Natural killer cell (primary cell): ENCODE measurements at regions of chr18 and their contacts with region 1.

Region 1: GRCh38 chr18:47772374-47773248 is 157.8 kb downstream of the SMAD2 start:
- DNase-seq: peak; percentile 54 to 66
- ATAC-seq: peak; percentile 66 to 81 (median 68)
- H3K4me3 ChIP-seq: no peak overlapping the region
- H3K4me3 Mint-ChIP-seq: no peak overlapping the region
- H3K27ac ChIP-seq: no peak overlapping the region
- H3K27ac Mint-ChIP-seq: no peak overlapping the region
- H3K4me1 ChIP-seq: no peaks in the 10 kb centered on the region
- H3K4me1 Mint-ChIP-seq: peaks cover 9 to 15% of the 10 kb centered on the region in 2 donors
- H3K27me3 ChIP-seq: no peaks in the 10 kb centered on the region
- H3K27me3 Mint-ChIP-seq: peaks cover 0 to 3% of the 10 kb centered on the region in 2 donors
- CTCF ChIP-seq: peak; percentile 92

Region 2: GRCh38 chr18:48022531-48023329 is 250.1 kb after region 1 on chr18:
- intact Hi-C with region 1: loop called (anchors 1 kb)
- DNase-seq: peak in 1 of 2 donors; percentile 63
- ATAC-seq: peak; percentile 59 to 77 (median 76)
- H3K4me3 ChIP-seq: no peak overlapping the region
- H3K4me3 Mint-ChIP-seq: no peak overlapping the region
- H3K27ac ChIP-seq: no peak overlapping the region
- H3K27ac Mint-ChIP-seq: no peak overlapping the region
- H3K4me1 ChIP-seq: peaks cover 13% of the 10 kb centered on the region
- H3K4me1 Mint-ChIP-seq: peaks cover 0 to 8% of the 10 kb centered on the region in 2 donors
- H3K27me3 ChIP-seq: no peaks in the 10 kb centered on the region
- H3K27me3 Mint-ChIP-seq: peaks cover 6 to 23% of the 10 kb centered on the region in 2 donors
- CTCF ChIP-seq: peak; percentile 58

Region 3: DNA sequence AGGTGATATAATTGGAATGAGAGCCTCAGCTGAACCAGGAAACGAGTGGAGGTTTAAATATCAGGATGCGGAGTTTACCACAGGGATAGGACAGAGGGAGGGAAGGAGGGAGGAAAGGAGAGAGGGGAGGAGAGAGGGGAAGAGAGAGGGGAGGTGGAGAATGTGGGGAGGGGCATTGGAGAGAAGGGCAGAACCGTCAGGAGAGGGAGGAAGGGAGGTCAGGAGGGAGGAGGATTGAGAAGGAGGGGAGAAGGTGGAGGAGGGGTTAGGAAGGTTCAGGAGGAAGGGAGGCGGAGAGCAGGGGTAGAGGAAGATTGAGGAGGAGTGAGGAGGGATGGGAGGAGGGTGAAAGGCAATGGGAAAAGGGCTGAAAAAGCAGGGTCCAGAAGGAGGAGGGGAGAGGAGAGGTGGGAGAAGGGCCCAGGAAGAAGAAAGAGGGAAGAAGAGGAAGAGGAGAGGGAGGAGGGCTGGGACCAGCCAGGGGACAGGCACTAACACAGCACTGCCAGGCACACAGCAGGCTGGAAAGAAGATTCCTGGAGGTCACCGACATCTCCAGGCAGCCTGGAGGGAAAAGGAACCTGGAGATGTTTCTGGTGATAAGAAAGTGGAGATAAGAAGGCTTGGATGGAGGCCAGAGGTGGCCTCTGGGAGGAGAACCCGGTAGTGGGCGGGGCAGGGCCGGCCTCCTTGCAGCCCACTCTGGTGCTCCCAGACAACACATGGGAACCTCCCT is 334.5 kb after region 1 on chr18:
- intact Hi-C with region 1: loop called (anchors 5 kb)
- DNase-seq: no peak
- ATAC-seq: no peak
- H3K4me3 ChIP-seq: no peak overlapping the region
- H3K4me3 Mint-ChIP-seq: no peak overlapping the region
- H3K27ac ChIP-seq: no peak overlapping the region
- H3K27ac Mint-ChIP-seq: no peak overlapping the region
- H3K4me1 ChIP-seq: no peaks in the 10 kb centered on the region
- H3K4me1 Mint-ChIP-seq: no peaks in the 10 kb centered on the region
- H3K27me3 ChIP-seq: no peaks in the 10 kb centered on the region
- H3K27me3 Mint-ChIP-seq: peaks cover 13 to 24% of the 10 kb centered on the region in 2 donors
- CTCF ChIP-seq: no peak

Region 4: GRCh38 chr18:48445540-48445939 is 672.9 kb after region 1 on chr18:
- intact Hi-C with region 1: loop called (anchors 5 kb)
- DNase-seq: peak; percentile 51 to 80
- ATAC-seq: peak; percentile 77 to 86 (median 80)
- H3K4me3 ChIP-seq: no peak overlapping the region
- H3K4me3 Mint-ChIP-seq: no peak overlapping the region
- H3K27ac ChIP-seq: no peak overlapping the region
- H3K27ac Mint-ChIP-seq: no peak overlapping the region
- H3K4me1 ChIP-seq: no peaks in the 10 kb centered on the region
- H3K4me1 Mint-ChIP-seq: peaks cover 6% of the 10 kb centered on the region in 2 donors
- H3K27me3 ChIP-seq: no peaks in the 10 kb centered on the region
- H3K27me3 Mint-ChIP-seq: peaks cover 14 to 24% of the 10 kb centered on the region in 2 donors
- CTCF ChIP-seq: peak; percentile 76